ENCODE measurements at regions of chr11 and their contacts with region 1.

Region 1: GRCh38 chr11:73141848-73142286 is 251 bp downstream of the FCHSD2 start:
- DNase-seq: peak; percentile 68
- CTCF ChIP-seq: no peak

Region 2: GRCh38 chr11:73157053-73158010 is 15.5 kb after region 1 on chr11:
- CTCF ChIA-PET with region 1: interaction called, 44 read pairs
- POLR2A ChIA-PET with region 1: interaction called, 6 read pairs
- DNase-seq: peak; percentile 77
- CTCF ChIP-seq: no peak

Region 3: DNA sequence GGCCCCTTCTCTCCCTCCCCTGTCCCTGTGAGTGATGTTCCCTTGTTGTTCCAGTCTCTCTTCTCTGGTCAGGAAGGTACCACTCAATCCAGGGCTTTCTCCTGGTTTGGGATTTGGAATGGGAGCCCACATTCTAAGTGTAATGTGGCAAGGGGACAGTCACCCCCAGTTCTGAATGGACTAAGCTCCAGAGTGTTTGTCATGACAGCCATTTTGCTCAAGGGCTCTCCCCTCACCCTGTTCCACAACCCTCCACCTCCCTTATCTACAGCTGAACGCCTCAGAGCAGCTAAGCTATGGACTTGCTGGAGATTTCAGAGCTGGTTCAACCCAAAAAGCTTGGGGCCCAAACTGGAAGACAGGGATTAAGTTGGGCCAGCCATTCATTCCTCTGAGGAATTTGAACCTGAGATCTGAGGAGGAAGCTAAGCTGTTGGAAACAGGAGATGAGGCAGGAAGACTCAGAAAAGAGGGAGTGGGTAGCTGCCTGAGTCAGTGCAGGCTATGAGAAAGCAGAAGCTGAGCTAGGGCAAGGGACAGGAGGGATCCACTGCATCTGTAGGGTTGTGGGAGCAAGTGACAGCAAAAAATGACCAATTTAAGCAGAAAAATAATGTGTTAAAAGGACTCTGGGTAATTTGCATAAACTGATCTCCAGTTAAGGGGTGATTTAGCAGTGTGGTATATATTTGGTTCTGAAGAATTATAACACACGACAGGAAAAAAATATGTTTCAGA is 23.1 kb after region 1 on chr11:
- CTCF ChIA-PET with region 1: interaction called, 44 read pairs
- POLR2A ChIA-PET with region 1: no interaction called
- DNase-seq: no peak
- CTCF ChIP-seq: no peak

Region 4: GRCh38 chr11:73257342-73258103 is 115.7 kb after region 1 on chr11:
- CTCF ChIA-PET with region 1: no interaction called
- POLR2A ChIA-PET with region 1: no interaction called
- DNase-seq: no peak
- CTCF ChIP-seq: no peak

Measured in GM10248 (cell line).